ENCODE measurements at regions of chr7 and their contacts with region 1.

Region 1: GRCh38 chr7:93245525-93246432 is 13.6 kb downstream of the VPS50 start:
- DNase-seq: no peak
- ATAC-seq: no peak
- H3K4me3 Mint-ChIP-seq: no peak overlapping the region
- H3K27ac Mint-ChIP-seq: no peak overlapping the region
- H3K4me1 Mint-ChIP-seq: peaks cover 11% of the 10 kb centered on the region
- H3K27me3 Mint-ChIP-seq: no peaks in the 10 kb centered on the region

Region 2: GRCh38 chr7:92880212-92881090 is 365.3 kb before region 1 on chr7:
- CTCF ChIA-PET with region 1: no interaction called
- POLR2A ChIA-PET with region 1: no interaction called
- intact Hi-C with region 1: no loop called
- DNase-seq: peak; percentile 26
- ATAC-seq: peak; percentile 54
- H3K4me3 Mint-ChIP-seq: no peak overlapping the region
- H3K27ac Mint-ChIP-seq: no peak overlapping the region
- H3K4me1 Mint-ChIP-seq: peaks cover 18% of the 10 kb centered on the region
- H3K27me3 Mint-ChIP-seq: peaks cover 4% of the 10 kb centered on the region

Region 3: GRCh38 chr7:93279541-93279940 is 33.8 kb after region 1 on chr7:
- CTCF ChIA-PET with region 1: interaction called, 17 read pairs
- POLR2A ChIA-PET with region 1: no interaction called
- intact Hi-C with region 1: no loop called
- DNase-seq: no peak
- ATAC-seq: no peak
- H3K4me3 Mint-ChIP-seq: no peak overlapping the region
- H3K27ac Mint-ChIP-seq: no peak overlapping the region
- H3K4me1 Mint-ChIP-seq: no peaks in the 10 kb centered on the region
- H3K27me3 Mint-ChIP-seq: no peaks in the 10 kb centered on the region

Region 4: DNA sequence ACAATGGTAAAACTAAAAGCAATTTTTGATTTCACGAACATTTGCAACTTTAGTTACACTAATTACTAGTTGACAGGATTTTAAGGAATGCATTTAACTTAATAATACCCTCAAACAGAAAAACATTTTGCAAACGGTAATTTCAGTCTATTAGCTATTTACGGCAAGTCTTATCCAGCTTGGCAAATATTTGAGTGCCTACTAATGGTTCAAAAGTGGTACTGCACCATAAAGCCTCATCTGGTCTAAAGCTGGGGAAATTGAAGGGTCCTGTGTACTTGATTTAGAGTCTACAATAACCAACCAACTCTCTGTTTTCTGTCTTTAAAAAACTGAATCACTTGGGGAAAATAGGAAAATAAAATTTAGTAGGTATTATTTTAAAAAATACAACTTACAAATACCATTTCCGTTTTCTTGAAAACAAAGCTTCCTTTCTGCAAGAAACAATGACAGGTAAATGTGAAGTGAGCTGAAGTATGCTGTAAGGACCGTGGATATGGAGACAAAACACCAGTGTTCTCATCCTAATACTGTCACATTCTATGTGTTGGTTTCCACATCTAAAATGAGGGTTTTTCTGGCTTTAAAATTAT is 128.7 kb after region 1 on chr7:
- CTCF ChIA-PET with region 1: interaction called, 6 read pairs
- POLR2A ChIA-PET with region 1: no interaction called
- intact Hi-C with region 1: loop called (anchors 2 to 10 kb)
- DNase-seq: no peak
- ATAC-seq: no peak
- H3K4me3 Mint-ChIP-seq: no peak overlapping the region
- H3K27ac Mint-ChIP-seq: no peak overlapping the region
- H3K4me1 Mint-ChIP-seq: no peaks in the 10 kb centered on the region
- H3K27me3 Mint-ChIP-seq: peaks cover 12% of the 10 kb centered on the region

Region 5: DNA sequence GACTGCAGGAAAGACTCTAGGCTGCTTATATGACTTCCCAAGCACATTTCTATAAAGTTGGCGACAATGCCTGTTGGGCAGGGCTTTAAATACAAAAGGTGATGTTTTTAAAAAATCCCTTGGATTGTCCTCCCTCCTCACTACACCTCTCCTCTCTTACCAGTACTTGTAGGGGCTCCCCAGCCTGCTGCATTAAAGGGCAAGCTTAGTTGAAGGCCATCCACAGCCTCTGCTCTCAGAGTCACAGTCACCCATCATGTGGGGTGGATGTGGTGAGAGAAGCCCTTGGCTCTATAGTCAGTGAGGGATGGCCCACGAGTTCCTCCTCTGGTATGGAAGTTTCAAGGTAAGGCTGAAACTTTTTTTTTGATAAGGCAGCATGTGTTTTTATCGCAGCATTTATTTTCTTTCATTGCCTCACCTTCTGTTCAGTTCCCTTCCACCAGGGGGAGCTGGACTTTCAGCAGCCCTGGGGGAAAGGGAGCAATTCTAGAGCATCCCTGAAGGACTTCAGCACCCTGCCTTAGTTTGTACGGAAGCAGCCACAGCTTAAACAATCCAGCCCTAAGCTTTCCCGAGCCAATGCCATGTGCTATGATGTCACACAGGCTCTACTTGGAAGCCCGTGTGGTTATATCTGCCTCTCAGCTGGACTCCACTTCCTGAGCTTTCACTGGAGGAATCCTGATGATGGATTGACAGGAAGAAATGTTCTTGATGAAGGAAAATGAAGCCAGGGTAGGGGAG is 196.9 kb after region 1 on chr7:
- CTCF ChIA-PET with region 1: interaction called, 8 read pairs
- POLR2A ChIA-PET with region 1: no interaction called
- intact Hi-C with region 1: loop called in 1 of 2 experiments (anchors 2 kb)
- DNase-seq: peak; percentile 62
- ATAC-seq: peak; percentile 58
- H3K4me3 Mint-ChIP-seq: no peak overlapping the region
- H3K27ac Mint-ChIP-seq: no peak overlapping the region
- H3K4me1 Mint-ChIP-seq: no peaks in the 10 kb centered on the region
- H3K27me3 Mint-ChIP-seq: no peaks in the 10 kb centered on the region

Region 6: GRCh38 chr7:93551063-93551904 is 305.5 kb after region 1 on chr7:
- CTCF ChIA-PET with region 1: interaction called, 33 read pairs
- POLR2A ChIA-PET with region 1: no interaction called
- intact Hi-C with region 1: loop called (anchors 1 to 2 kb)
- DNase-seq: no peak
- ATAC-seq: no peak
- H3K4me3 Mint-ChIP-seq: no peak overlapping the region
- H3K27ac Mint-ChIP-seq: no peak overlapping the region
- H3K4me1 Mint-ChIP-seq: no peaks in the 10 kb centered on the region
- H3K27me3 Mint-ChIP-seq: no peaks in the 10 kb centered on the region

Region 7: DNA sequence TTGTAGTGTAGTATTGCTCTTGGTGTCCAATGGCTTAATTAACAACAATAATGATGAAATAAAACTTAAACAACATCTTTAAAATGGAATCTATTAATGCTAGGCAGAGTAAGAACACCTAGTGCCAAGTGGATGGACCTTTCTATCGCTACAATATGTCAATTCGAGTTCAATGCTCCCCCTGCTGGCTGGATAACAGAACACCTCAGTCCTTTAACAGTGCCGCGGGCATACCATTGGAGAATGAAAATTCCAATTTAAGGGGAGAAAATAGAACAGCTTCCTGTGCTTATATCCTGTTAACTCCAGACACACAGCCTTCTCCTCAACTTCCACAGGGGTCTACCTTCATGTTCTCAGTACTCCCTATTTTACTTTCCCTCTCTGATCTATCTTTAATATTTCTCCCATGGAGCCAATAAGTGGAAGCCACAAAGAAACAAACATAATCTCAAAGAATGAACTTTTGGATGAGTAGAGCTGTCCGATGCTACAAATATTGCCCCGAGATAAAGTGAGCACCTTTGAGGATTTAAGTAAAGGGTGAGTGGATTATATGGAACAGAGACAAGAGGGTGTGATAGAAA is 1190.3 kb after region 1 on chr7:
- CTCF ChIA-PET with region 1: no interaction called
- POLR2A ChIA-PET with region 1: no interaction called
- intact Hi-C with region 1: loop called in 1 of 2 experiments (anchors 2 kb)
- DNase-seq: peak; percentile 70
- ATAC-seq: peak; percentile 42
- H3K4me3 Mint-ChIP-seq: no peak overlapping the region
- H3K27ac Mint-ChIP-seq: no peak overlapping the region
- H3K4me1 Mint-ChIP-seq: no peaks in the 10 kb centered on the region
- H3K27me3 Mint-ChIP-seq: peaks cover 18% of the 10 kb centered on the region